ENCODE measurements at regions of chr3 and their contacts with region 1.

Region 1: DNA sequence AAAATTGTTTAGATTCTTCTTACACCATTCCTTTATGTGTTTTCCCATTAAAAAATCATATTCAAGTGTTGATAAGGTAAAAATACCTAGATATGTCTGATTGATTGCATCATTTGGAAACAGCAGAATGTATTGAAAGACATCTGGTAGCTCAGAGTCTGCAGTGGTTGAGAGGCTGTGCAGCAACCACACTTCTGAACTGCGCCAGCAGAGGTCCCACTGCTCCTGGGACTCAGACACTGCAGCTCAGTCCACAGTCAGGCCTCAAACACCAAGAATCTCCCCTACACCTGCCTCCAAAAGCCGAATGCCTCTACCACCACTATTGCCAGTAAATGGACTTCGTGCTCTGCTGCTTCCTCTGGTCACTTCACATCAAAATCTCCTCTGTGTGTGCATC is 176.9 kb upstream of the LMCD1 start:
- DNase-seq: peak; percentile 50

Region 2: GRCh38 chr3:8313560-8314267 is 11.0 kb before region 1 on chr3:
- CTCF ChIA-PET with region 1: no interaction called
- POLR2A ChIA-PET with region 1: no interaction called
- DNase-seq: no peak

Region 3: GRCh38 chr3:8341821-8342247 is 17.1 kb after region 1 on chr3:
- CTCF ChIA-PET with region 1: no interaction called
- POLR2A ChIA-PET with region 1: no interaction called
- DNase-seq: no peak

Region 4: DNA sequence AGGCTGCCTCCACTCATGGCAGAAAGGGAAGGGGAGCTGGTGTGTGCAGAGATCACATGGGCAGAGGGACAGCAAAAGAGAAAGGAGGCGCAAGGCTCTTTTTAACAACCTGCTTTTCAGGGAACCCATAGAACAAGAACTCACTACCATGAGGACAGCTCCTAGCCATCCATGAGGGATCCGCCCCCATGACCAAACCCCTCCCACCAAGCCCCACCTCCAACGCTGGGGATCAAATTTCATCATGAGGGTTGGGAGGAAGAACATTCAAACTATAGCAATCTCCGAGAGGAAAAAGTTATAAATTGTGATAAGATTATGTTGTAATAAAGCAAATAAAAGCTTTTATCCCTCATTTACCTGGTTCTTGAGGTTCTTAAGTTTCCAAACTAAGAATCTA is 92.2 kb after region 1 on chr3:
- CTCF ChIA-PET with region 1: interaction called, 12 read pairs
- POLR2A ChIA-PET with region 1: no interaction called
- DNase-seq: peak; percentile 12

Measured in HEK293T (cell line).